Activated T-helper 1 cell treated with anti-CD3 and anti-CD28 coated beads, Interleukin-12 subunit alpha, Interleukin-12 subunit beta, Interleukin-2, Interleukin-4 antibody, amounts not matched to agents 30 ng/mL and 10 ng/mL and 1 ng/mL, durations not matched to agents 14 hours and 24 hours and 36 hours (primary cell): ENCODE measurements at regions of chr20 and their contacts with region 1.

Region 1: DNA sequence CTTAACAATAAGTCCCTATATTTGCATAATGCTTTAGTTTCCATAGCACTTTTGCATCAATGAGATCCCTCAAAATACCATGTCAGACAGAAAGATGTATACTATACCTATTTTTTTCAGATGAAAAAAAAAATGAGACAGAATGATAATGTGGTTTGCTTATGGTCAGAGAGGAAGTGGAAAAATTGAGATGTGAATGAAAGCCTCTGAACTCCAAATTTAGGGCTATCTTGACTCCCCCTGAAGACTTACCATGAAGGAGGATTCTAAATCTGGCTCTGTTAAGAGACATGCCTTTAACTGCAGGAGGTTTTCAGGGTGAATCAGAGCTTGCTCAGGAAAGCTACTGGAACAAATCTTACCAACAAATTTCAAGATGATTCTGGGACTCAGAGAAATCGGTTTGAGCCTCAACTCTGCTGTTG is 176.2 kb downstream of the ISM1 start:
- DNase-seq: no peak
- H3K4me3 Mint-ChIP-seq: no peak overlapping the region
- H3K27ac Mint-ChIP-seq: no peak overlapping the region
- H3K4me1 Mint-ChIP-seq: peaks cover 9% of the 10 kb centered on the region
- H3K27me3 Mint-ChIP-seq: no peaks in the 10 kb centered on the region

Region 2: DNA sequence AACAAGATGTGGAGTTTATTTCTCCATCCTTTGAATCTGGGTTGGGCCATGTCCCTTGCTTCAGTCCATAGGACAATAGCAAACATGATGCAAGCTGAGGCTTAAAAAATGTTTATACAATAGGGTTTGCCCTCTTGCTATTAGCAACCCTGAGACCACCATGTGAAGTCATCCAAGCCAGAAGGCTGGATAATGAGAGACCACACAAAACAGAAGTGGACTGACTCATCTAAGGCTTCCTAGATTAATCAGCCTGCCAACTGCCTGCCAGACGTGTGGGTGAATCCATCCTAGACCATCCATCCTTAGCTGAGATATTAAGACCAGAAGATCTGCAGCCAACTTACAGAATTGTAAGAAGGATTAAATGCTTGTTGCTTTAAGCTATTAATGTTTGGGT is 214.3 kb before region 1 on chr20:
- intact Hi-C with region 1: no loop called
- DNase-seq: no peak
- H3K4me3 Mint-ChIP-seq: no peak overlapping the region
- H3K27ac Mint-ChIP-seq: no peak overlapping the region
- H3K4me1 Mint-ChIP-seq: no peaks in the 10 kb centered on the region
- H3K27me3 Mint-ChIP-seq: peaks cover 9% of the 10 kb centered on the region

Region 3: GRCh38 chr20:13336308-13337089 is 60.8 kb before region 1 on chr20:
- intact Hi-C with region 1: loop called (anchors 2 kb)
- DNase-seq: no peak
- H3K4me3 Mint-ChIP-seq: no peak overlapping the region
- H3K27ac Mint-ChIP-seq: no peak overlapping the region
- H3K4me1 Mint-ChIP-seq: peaks cover 36% of the 10 kb centered on the region
- H3K27me3 Mint-ChIP-seq: no peaks in the 10 kb centered on the region